GM23248 (cell line): ENCODE measurements at regions of chr12 and their contacts with region 1.

Region 1: GRCh38 chr12:5073853-5074252 is 30.2 kb downstream of the KCNA5 start:
- DNase-seq: peak; percentile 49
- H3K4me3 ChIP-seq: no peak overlapping the region
- H3K27ac ChIP-seq: no peak overlapping the region
- H3K4me1 ChIP-seq: no peaks in the 10 kb centered on the region
- H3K27me3 ChIP-seq: 0 out of 2 replicates have a peak, but pooled peaks cover 3% of the 10 kb centered on the region

Region 2: DNA sequence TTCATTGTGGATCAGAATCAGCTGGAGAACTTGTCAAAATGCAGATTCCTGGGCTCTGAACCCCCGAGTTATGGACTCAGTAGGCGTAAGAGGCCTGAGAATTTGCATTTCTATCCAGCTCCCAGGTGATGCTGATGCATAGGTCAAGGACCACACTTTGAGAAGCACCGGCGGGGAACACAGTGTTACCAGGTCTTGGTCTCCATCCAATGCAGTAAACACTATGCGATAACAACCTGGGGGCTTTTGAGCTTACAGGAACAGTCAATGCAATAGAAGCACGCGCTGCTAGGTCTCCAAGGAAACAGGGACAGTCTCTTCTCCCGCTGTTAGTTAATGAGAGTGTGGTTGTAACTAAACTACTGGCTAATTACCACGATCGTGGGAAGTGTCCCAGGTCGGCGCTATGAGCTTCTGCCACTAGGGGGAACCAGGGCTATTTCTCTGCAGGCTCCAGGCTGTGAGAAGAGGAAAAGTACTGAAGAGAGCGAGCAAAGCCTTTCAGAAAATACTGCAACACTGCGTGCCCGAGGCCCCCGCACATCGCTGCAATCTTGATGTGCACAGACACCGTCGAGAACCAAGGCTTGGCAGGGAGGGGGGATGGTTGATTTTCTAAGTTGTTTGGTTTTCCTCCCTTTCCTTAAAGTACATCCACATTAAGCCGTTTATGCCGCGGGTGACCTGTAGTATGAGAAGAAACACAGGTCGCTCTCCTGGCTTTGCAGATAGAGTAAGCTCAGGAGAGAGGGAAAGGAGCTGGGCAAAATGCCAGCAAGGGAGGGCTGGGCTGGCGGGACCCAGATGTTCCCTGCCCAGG is 216.2 kb before region 1 on chr12:
- in situ Hi-C with region 1: loop called (anchors 10 kb)
- DNase-seq: peak; percentile 83
- H3K4me3 ChIP-seq: peak overlapping the region; percentile 40; the same call in 1 of the 2 replicates
- H3K27ac ChIP-seq: no peak overlapping the region
- H3K4me1 ChIP-seq: no peaks in the 10 kb centered on the region
- H3K27me3 ChIP-seq: peaks cover 21% of the 10 kb centered on the region

Region 3: GRCh38 chr12:4975574-4975973 is 98.3 kb before region 1 on chr12:
- in situ Hi-C with region 1: no loop called
- DNase-seq: no peak
- H3K4me3 ChIP-seq: no peak overlapping the region
- H3K27ac ChIP-seq: no peak overlapping the region
- H3K4me1 ChIP-seq: no peaks in the 10 kb centered on the region
- H3K27me3 ChIP-seq: peaks cover 13% of the 10 kb centered on the region

Region 4: DNA sequence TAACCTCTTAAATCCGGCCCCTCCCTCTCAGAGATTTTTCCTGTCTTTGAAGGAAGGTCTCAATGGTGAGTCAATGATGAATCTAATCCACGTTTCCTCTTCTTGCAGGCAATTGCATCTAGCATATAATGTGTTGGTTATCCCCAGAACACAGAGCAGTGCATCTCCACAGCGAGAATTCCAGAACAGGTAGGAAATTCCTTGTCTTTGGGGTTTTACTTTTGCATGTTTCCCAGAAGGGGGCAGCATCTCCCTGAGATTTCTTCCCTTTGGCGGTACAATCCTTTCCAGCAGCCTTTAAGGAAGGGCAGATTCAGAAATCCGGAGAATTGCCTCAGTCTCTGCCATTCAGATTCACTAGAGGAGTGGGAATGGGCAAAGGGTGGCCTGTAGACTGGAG is 97.8 kb after region 1 on chr12:
- in situ Hi-C with region 1: loop called (anchors 25 kb)
- DNase-seq: peak; percentile 67
- H3K4me3 ChIP-seq: no peak overlapping the region
- H3K27ac ChIP-seq: no peak overlapping the region
- H3K4me1 ChIP-seq: peaks cover 11% of the 10 kb centered on the region
- H3K27me3 ChIP-seq: no peaks in the 10 kb centered on the region